BJ (cell line): ENCODE measurements at regions of chr7 and their contacts with region 1.

Region 1: GRCh38 chr7:116984917-116985316 is 31.6 kb downstream of the ST7 start:
- DNase-seq: no peak
- H3K4me3 ChIP-seq: no peak overlapping the region
- H3K27me3 ChIP-seq: no peaks in the 10 kb centered on the region
- CTCF ChIP-seq: peak; percentile 64

Region 2: GRCh38 chr7:116971869-116972268 is 13.0 kb before region 1 on chr7:
- CTCF ChIA-PET with region 1: interaction called, 10 read pairs
- POLR2A ChIA-PET with region 1: no interaction called
- DNase-seq: no peak
- H3K4me3 ChIP-seq: no peak overlapping the region
- H3K27me3 ChIP-seq: no peaks in the 10 kb centered on the region
- CTCF ChIP-seq: no peak

Region 3: DNA sequence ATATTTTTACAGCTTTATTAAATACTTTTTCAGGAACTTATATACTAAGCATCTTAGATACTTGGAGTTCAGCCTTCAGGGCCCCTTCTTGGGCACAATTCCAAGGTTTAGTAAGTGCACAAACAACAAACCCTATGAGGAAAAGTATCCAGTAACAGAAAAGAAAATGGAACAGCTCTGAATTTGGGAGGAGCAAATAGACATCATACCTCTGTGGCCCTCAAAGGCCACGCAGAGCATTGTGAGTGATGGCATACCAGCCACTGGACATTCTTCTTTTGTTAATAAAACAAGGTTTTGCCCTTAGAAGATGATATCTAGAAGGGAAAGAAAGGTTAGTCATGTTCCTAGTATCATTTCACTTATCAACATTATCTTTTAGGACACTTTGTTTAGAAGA is 14.4 kb after region 1 on chr7:
- CTCF ChIA-PET with region 1: interaction called, 33 read pairs
- POLR2A ChIA-PET with region 1: no interaction called
- DNase-seq: no peak
- H3K4me3 ChIP-seq: no peak overlapping the region
- H3K27me3 ChIP-seq: no peaks in the 10 kb centered on the region
- CTCF ChIP-seq: no peak

Region 4: GRCh38 chr7:117012696-117013095 is 27.8 kb after region 1 on chr7:
- CTCF ChIA-PET with region 1: interaction called, 16 read pairs
- POLR2A ChIA-PET with region 1: interaction called, 8 read pairs
- DNase-seq: no peak
- H3K4me3 ChIP-seq: no peak overlapping the region
- H3K27me3 ChIP-seq: no peaks in the 10 kb centered on the region
- CTCF ChIP-seq: peak; percentile 42

Region 5: GRCh38 chr7:117119192-117119924 is 134.4 kb after region 1 on chr7:
- CTCF ChIA-PET with region 1: interaction called, 200 read pairs
- POLR2A ChIA-PET with region 1: no interaction called
- DNase-seq: no peak
- H3K4me3 ChIP-seq: no peak overlapping the region
- H3K27me3 ChIP-seq: no peaks in the 10 kb centered on the region
- CTCF ChIP-seq: peak; percentile 82

Region 6: DNA sequence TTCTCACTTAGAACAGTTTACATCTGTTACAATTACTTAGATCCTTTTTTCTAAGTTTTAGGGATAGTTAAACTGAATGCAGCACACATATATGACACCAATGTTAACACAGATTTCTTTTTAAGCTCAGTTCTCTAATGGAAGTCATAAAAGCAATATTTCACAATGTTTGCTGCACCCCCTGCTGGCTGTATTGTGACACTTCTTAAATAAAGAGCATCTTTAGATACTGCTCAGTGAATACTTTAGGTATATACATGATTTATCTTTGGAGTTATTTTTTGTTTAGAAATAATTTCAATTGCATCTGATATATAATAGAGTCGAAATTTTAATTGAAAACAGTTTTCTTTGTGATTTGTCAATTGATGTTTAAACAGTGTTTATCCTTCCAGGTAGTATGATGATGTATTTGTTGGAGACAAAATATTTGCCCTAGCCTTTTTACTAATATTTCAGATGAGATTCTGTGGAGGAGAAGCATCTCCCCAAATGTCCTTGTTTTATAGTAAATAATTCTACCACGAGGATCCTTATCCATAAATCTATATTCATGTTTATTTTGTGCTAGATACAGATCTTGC is 142.8 kb after region 1 on chr7:
- CTCF ChIA-PET with region 1: interaction called, 200 read pairs
- POLR2A ChIA-PET with region 1: no interaction called
- DNase-seq: peak; percentile 11
- H3K4me3 ChIP-seq: no peak overlapping the region
- H3K27me3 ChIP-seq: no peaks in the 10 kb centered on the region
- CTCF ChIP-seq: peak; percentile 70